Activated CD4-positive, alpha-beta memory T cell treated with anti-CD3 and anti-CD28 coated beads for 36 hours (primary cell): ENCODE measurements at regions of chr16 and their contacts with region 1.

Region 1: DNA sequence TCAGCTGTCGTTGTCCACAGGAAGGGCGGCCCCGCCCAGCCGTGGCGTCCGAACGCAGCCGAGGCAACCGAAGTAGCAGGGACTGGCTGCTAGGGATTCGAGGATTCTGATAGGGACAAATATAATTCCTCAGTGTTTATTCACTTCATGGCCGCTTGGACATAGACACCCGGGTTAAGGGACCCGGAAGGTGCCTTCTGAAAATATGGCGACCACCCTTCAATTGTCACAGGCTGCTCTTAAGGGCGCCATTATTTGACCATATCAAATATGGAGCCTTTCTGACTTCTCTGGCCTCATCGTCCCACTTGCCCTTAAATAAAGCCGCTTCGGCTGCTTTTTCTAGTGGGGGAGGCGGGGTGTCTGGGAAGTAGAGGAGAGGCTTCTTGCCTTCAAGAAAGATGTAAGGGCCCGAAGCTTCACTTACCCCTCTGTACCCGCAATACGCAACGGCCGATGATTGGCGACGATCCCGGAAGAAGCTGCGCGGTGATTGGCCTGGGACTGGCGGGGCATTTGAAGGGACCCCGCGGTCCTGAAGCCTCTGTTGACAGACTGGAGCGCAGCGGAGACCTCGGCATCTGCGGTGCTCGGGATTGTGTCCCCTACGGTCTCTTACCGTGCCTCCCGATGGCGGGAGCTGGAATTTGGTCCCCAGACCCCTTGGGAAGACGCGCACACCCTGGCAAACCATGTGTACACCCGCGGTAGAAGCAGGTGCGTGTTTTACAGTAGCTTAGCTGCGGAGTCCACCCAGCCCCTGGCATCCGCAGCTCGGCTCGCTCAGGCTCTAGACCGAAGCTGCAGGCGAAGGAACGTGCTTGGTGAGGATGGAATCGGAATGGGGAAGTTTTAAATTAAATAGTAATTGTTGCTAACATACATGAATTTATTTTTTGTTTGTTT is at the start of gene ZNF688:
- DNase-seq: peak; percentile 96
- H3K4me3 Mint-ChIP-seq: peak within 1 kb of the TSS; percentile 91
- H3K27ac Mint-ChIP-seq: peak within 1 kb of the TSS; percentile 92
- H3K4me1 Mint-ChIP-seq: peaks cover 48% of the 10 kb centered on the region
- H3K27me3 Mint-ChIP-seq: no peaks in the 10 kb centered on the region
- total RNA-seq, gene ZNF688: 9.2 to 9.3 TPM

Region 2: DNA sequence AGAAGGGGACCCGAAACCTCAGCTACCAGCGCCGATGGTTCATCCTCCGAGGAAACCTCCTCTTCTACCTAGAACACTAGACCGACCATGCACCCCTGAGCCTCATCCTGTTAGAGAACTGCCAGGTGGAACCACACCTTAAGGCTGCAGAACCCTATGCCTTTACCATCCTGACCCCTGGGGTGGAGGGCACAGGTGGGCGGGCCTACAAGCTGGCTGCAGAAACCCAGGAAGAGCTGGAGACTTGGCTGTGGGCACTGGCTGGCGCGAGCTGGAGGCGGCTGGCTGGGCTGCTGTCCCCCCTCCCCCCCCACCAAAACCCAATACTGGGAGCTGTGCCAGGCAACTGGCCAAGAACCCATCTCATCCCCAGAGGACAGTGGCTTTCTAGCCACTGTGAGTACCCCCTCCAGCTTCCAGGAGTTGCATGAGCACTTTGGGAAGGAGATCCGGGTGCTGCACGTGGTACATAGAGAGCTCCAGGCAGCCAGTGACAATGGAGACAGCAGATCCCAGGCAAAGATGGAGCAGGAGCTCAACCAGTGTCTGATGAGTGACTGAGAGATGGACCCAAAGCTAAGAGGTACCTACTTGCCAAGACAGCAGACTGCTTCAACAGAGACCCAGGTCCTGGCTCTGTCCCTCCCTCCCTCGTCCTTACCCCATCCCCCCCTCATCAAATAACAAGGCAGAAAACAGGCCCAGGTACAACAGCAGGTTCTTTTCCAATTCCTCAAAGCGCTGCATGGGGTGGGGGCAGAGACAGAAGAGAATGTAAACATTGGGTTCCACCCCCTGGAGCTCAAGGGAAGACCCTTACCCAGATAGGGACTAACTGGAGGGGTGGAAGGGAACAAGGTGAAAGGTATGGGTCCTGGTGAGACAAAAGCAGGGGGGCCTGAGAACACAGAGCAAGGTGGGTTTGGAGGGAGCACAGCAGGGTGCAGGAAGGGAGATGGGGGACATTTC is 215.3 kb before region 1 on chr16:
- CTCF ChIA-PET with region 1: no interaction called
- POLR2A ChIA-PET with region 1: no interaction called
- intact Hi-C with region 1: no loop called
- DNase-seq: peak; percentile 31
- H3K4me3 Mint-ChIP-seq: peak overlapping the region; percentile 94
- H3K27ac Mint-ChIP-seq: peak overlapping the region; percentile 95
- H3K4me1 Mint-ChIP-seq: peaks cover 35% of the 10 kb centered on the region
- H3K27me3 Mint-ChIP-seq: no peaks in the 10 kb centered on the region

Region 3: GRCh38 chr16:30370444-30371247 is 201.3 kb before region 1 on chr16 and contains the start of gene TBC1D10B:
- CTCF ChIA-PET with region 1: no interaction called
- POLR2A ChIA-PET with region 1: no interaction called
- intact Hi-C with region 1: loop called (anchors 2 kb)
- DNase-seq: peak; percentile 100
- H3K4me3 Mint-ChIP-seq: peak within 1 kb of the TSS; percentile 91
- H3K27ac Mint-ChIP-seq: peak within 1 kb of the TSS; percentile 95
- H3K4me1 Mint-ChIP-seq: peaks cover 34% of the 10 kb centered on the region
- H3K27me3 Mint-ChIP-seq: peaks cover 3% of the 10 kb centered on the region
- total RNA-seq, gene TBC1D10B: 54.7 to 54.8 TPM

Region 4: DNA sequence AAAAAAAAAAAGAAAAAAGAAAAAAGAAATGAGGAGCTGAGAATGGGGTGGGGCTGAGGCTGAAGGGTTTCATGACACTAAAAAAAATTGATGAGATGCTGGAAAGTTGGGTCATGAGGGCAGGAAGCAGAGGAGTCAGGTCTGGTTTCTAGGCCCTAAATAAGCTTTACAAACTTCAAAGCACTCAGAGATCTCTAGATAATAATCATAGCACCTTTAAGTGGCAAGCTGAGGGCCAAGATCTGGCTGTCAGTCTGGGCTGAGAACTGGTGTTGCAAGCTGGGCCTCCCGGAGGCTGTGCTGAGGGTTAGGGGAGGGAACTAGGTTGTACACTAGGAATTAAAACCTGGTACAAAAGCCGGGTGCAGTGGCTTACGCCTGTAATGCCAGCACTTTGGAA is 20.2 kb before region 1 on chr16:
- CTCF ChIA-PET with region 1: interaction called, 16 read pairs
- POLR2A ChIA-PET with region 1: interaction called, 39 read pairs
- intact Hi-C with region 1: loop called (anchors 1 kb)
- DNase-seq: peak; percentile 79
- H3K4me3 Mint-ChIP-seq: peak overlapping the region; percentile 58
- H3K27ac Mint-ChIP-seq: peak overlapping the region; percentile 96
- H3K4me1 Mint-ChIP-seq: peaks cover 57% of the 10 kb centered on the region
- H3K27me3 Mint-ChIP-seq: no peaks in the 10 kb centered on the region

Region 5: GRCh38 chr16:30557957-30558788 is 13.8 kb before region 1 on chr16 and contains the start of gene ZNF764:
- CTCF ChIA-PET with region 1: interaction called, 16 read pairs
- POLR2A ChIA-PET with region 1: interaction called, 39 read pairs
- intact Hi-C with region 1: loop called (anchors 1 kb)
- DNase-seq: peak; percentile 99
- H3K4me3 Mint-ChIP-seq: peak within 1 kb of the TSS; percentile 89
- H3K27ac Mint-ChIP-seq: peak within 1 kb of the TSS; percentile 96
- H3K4me1 Mint-ChIP-seq: peaks cover 38% of the 10 kb centered on the region
- H3K27me3 Mint-ChIP-seq: no peaks in the 10 kb centered on the region
- total RNA-seq, gene ZNF764: 13.7 to 14.2 TPM

Region 6: GRCh38 chr16:30585400-30586189 is 13.6 kb after region 1 on chr16 and contains the start of gene ZNF785:
- CTCF ChIA-PET with region 1: interaction called, 12 read pairs
- POLR2A ChIA-PET with region 1: interaction called, 13 read pairs
- intact Hi-C with region 1: loop called (anchors 1 kb)
- DNase-seq: peak; percentile 97
- H3K4me3 Mint-ChIP-seq: peak within 1 kb of the TSS; percentile 83
- H3K27ac Mint-ChIP-seq: peak within 1 kb of the TSS; percentile 83
- H3K4me1 Mint-ChIP-seq: peaks cover 32% of the 10 kb centered on the region
- H3K27me3 Mint-ChIP-seq: no peaks in the 10 kb centered on the region
- total RNA-seq, gene ZNF785: 14.0 to 15.0 TPM

Region 7: GRCh38 chr16:30761928-30762810 is 190.2 kb after region 1 on chr16 and contains the starts of genes CFAP119 and RNF40:
- CTCF ChIA-PET with region 1: no interaction called
- POLR2A ChIA-PET with region 1: no interaction called
- intact Hi-C with region 1: loop called (anchors 2 kb)
- DNase-seq: peak; percentile 96
- H3K4me3 Mint-ChIP-seq: peak within 1 kb of the TSS; percentile 93
- H3K27ac Mint-ChIP-seq: peak within 1 kb of the TSS; percentile 81
- H3K4me1 Mint-ChIP-seq: peaks cover 25% of the 10 kb centered on the region
- H3K27me3 Mint-ChIP-seq: no peaks in the 10 kb centered on the region
- total RNA-seq, gene CFAP119: 3.8 to 4.9 TPM
- total RNA-seq, gene RNF40: 70.9 to 72.8 TPM

Region 8: DNA sequence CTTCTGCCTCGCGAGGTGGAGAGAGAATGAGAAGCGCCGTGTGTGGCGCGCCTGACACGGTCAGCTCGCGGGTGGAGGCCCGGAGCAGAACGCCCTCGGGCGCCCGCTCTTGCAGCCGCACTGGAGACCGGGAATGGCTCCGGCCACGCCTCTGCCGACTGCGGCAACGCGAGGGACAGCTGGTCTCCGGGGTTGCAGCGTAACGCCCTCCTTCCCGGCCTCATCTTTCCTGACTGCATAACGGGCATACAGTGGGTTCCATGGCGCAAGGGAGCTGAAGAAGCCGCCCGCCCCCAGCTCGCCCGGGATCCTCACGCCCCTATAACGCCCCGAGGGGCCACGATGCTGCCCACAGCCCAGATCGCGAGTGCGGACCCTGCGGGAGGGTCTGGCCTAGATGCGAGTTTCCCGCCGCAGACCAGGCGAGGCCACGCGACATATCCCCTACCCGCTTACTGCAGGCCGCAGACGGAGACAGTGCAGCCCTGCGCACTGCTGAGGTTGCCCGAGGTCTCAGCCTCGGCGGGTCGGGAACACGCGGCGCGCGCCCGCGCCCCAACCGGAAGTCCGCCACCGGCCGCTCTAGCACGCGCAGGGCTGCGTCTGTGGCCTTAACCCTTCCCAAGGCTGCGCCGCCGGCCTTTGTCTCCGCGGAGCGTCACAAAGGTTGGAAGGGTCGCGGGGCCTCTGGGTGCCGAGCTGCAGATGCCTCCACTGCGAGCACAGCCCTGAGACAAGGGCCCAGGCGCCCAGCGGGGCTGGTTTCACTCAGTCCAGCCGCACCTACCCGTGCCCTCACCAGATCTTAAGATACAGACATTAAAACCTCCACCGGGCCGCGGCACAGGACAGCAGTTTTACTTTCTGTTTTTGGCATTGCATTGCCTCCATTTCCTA is 303.1 kb after region 1 on chr16:
- CTCF ChIA-PET with region 1: no interaction called
- POLR2A ChIA-PET with region 1: no interaction called
- intact Hi-C with region 1: no loop called
- DNase-seq: peak; percentile 93
- H3K4me3 Mint-ChIP-seq: peak overlapping the region; percentile 96
- H3K27ac Mint-ChIP-seq: peak overlapping the region; percentile 90
- H3K4me1 Mint-ChIP-seq: peaks cover 34% of the 10 kb centered on the region
- H3K27me3 Mint-ChIP-seq: no peaks in the 10 kb centered on the region